ENCODE measurements at regions of chr6 and their contacts with region 1.

Region 1: GRCh38 chr6:150142670-150143515 is at the start of gene PPP1R14C:
- DNase-seq: peak; percentile 70
- ATAC-seq: peak; percentile 82
- total RNA-seq, gene PPP1R14C: 129 TPM

Region 2: DNA sequence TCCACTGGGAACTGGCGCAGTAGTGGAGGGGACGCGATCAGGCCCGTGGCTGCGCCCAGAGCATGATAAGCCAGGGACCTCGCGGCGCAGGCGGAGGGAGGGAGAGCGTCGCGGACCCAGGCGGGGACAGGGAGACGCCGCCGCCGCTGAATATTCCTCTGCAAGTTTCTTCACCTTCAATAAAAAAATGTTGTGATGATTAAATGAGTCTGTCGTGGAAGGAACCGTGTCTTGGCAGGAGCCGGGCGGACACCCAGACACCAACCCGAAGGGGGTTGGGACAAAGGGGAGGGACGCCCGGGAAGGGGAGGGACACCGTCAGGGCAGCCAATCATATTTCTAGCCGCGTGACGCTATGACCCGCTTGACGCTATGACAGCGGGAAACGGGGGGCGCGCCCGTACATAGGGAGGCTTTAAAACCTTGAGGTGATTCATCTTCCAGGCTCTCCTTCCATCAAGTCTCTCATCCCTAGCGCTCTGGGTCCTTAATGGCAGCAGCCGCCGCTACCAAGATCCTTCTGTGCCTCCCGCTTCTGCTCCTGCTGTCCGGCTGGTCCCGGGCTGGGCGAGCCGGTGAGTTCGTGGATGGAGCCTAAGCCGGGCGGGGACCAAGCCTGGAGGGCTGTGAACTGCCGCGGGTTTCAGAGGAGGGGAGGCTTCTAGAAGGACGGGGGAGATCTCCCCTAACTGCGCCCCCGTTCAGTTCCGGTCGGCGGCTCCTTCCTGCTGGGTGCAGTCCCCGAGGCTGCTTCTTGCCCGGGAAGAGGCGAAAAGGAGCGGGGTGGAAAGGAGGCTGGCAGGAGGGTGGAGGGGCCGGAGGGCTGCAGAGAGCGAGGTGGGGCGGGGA is 201.1 kb before region 1 on chr6 and contains the start of gene ULBP2:
- intact Hi-C with region 1: no loop called
- DNase-seq: peak; percentile 89
- ATAC-seq: peak; percentile 93
- total RNA-seq, gene ULBP2: 1.3 TPM

Region 3: GRCh38 chr6:150157081-150157480 is 14.2 kb after region 1 on chr6:
- intact Hi-C with region 1: no loop called
- DNase-seq: no peak
- ATAC-seq: no peak

Region 4: DNA sequence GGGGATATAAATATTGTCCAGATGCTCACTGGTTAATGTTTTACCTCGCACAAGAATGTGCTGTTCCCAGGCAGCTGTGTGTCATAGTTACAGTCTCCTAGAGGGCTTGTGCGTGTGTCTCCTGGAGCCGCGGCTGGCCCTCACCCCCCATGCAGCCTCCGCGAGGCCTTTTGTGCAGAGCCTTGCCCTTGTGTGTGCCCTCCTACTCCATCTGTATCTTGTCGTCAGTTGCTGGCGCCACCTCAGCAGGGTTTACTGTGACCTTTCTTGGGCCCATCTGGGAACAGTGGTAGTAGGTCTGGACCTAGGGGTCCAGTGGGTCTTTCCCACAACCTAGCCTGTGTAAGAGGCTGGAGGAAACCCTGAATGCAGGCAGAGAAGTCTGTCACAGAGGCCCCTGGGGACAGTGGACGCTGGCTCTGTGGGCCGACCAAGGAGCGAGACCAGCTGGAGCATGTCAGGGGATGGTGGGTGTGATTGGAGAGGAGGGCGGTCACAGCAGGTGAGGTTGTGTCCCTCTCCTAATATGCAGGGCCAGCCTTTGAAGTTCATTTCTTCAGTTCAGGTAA is 35.1 kb after region 1 on chr6:
- intact Hi-C with region 1: loop called (anchors 1 kb)
- DNase-seq: no peak
- ATAC-seq: peak; percentile 58

Region 5: DNA sequence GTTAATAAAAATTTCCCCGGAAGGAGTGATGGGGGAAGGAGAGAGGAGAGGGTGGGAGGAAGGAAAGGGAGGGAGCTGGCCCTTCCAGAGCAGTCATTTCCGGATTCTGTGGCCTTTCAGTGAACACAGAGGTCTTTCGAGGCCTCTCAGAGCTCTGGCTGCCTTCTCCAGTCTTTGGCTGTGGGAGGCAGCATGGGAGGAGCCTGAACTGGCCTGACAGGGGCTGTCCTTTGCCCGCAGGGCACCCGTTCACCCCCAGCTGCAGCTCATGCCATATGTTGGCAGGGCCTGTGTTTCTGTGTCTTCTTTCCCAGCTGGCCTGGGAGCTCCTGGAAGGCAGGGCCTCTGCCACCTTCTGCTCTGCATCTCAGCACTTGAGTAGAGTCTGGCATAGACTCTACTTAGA is 95.4 kb after region 1 on chr6:
- intact Hi-C with region 1: loop called (anchors 5 kb)
- DNase-seq: no peak
- ATAC-seq: peak; percentile 92

Region 6: GRCh38 chr6:150250826-150251225 is 107.9 kb after region 1 on chr6:
- intact Hi-C with region 1: loop called (anchors 5 kb)
- DNase-seq: no peak
- ATAC-seq: peak; percentile 11

Region 7: GRCh38 chr6:150320442-150320841 is 177.5 kb after region 1 on chr6:
- intact Hi-C with region 1: loop called (anchors 2 kb)
- DNase-seq: peak; percentile 85
- ATAC-seq: peak; percentile 95

Region 8: GRCh38 chr6:150343434-150343833 is 200.5 kb after region 1 on chr6:
- intact Hi-C with region 1: no loop called
- DNase-seq: no peak
- ATAC-seq: no peak

Region 9: DNA sequence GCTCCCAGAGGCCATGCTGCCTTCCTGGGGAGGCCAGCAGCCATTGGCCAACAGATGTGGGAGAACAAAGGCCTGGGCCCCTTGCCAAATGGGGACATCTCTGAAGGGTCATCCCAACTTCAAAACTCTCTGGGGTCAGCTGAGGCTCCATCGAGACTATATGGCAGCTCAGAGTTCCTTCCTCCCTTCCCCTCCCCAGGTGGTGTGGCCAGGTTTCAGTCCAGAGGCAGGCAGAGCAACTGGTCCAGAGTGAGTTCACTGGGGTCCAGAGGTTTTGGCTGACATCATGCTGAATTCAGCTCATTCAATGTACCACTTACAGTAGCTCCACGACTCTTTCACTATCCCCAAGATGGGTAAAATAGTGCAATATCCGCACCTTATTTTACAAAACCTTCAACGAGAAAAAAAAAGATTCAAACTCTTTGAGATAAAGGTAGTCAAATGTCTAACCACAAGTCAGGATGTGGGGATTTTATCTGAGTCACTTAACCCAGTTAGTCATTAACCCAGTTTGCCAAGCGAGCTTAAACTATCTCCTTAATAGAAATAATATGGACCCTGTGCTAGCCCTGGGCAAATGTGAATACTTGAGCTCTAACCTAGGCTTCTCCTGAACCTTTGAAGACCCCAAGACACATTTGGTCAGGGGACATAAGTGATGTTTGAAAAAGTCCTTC is 348.4 kb after region 1 on chr6:
- intact Hi-C with region 1: no loop called
- DNase-seq: no peak
- ATAC-seq: no peak

Measured in Right ventricle myocardium inferior (tissue), 1 donor.